CD8-positive, alpha-beta T cell (primary cell): ENCODE measurements at regions of chr13 and their contacts with region 1.

Region 1: DNA sequence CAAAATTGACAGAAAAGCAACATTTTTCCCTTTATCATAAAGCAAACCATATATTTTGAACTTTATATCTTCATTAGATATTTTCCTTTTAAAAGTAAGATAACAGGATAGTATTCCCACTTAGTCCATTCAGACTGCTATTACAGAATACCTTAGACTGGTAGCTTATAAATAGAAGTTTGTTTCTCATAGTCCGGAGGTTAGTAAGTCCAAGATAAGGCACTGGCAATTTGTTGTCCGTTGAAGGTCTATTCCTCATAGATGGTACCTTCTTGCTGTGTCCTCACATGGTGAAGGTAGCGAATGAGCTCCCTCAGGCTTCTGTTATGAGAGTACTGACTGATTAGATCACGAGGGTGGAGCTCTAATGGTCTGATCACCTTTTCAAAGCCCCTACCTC is 70.4 kb downstream of the ZMYM2 start:
- DNase-seq: no peak
- ATAC-seq: no peak
- H3K4me3 ChIP-seq: no peak overlapping the region
- H3K4me3 Mint-ChIP-seq: no peak overlapping the region
- H3K27ac ChIP-seq: no peak overlapping the region
- H3K27ac Mint-ChIP-seq: no peak overlapping the region
- H3K4me1 ChIP-seq: no peaks in the 10 kb centered on the region
- H3K4me1 Mint-ChIP-seq: peaks cover 9% of the 10 kb centered on the region
- H3K27me3 ChIP-seq: no peaks in the 10 kb centered on the region
- H3K27me3 Mint-ChIP-seq: no peaks in the 10 kb centered on the region
- CTCF ChIP-seq: no peak

Region 2: DNA sequence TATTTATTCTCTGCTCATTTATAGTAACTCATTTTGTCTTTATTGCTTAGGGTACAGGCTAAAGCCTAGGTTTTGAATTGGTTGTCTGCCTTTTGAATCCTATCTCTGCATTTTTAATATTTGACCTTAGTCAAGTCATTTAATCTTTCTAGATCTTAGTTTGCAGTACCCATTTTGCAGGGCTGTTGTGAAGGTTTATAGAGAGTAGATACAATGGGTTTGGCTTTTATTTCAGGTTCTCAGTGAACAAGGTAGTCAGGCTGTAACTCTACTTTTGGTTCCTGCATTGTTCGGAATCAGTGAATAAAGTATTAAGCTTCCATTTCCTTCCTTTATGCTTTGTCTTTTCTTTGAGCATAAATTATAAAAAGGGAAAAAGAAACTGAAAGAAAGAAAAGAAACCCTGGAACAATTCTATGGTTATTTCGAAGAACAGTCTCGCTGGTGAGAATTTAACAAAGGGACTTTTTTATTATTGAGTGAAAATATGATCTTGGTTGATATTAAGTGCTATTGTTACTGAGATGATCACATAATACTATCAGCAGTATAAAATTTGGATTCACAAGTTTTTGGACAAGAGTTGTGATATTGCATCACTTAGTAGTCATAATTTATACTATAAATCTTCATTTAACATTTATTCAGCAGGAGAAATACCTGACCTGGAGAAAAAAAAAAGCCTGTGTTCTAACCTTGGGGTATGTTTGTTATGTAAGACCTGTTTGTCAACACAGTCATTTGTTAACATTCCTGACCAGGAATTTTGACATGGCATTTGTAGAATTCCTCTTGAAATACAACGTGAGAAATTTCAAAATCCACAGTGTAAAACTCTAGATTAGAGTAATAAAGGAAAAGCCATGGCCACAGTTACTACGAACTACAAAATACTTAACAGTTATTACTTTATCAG is 20.9 kb after region 1 on chr13:
- CTCF ChIA-PET with region 1: no interaction called
- POLR2A ChIA-PET with region 1: no interaction called
- intact Hi-C with region 1: loop called in 1 of 2 experiments (anchors 2 kb)
- DNase-seq: peak in 1 of 9 experiments; percentile 10
- ATAC-seq: no peak
- H3K4me3 ChIP-seq: no peak overlapping the region
- H3K4me3 Mint-ChIP-seq: peak overlapping the region; percentile 60
- H3K27ac ChIP-seq: peak overlapping the region in 1 of 2 experiments; percentile 13
- H3K27ac Mint-ChIP-seq: peak overlapping the region; percentile 61
- H3K4me1 ChIP-seq: peaks cover 13% of the 10 kb centered on the region
- H3K4me1 Mint-ChIP-seq: peaks cover 23% of the 10 kb centered on the region
- H3K27me3 ChIP-seq: no peaks in the 10 kb centered on the region
- H3K27me3 Mint-ChIP-seq: no peaks in the 10 kb centered on the region
- CTCF ChIP-seq: no peak